ENCODE measurements at regions of chr4 and their contacts with region 1.

Region 1: DNA sequence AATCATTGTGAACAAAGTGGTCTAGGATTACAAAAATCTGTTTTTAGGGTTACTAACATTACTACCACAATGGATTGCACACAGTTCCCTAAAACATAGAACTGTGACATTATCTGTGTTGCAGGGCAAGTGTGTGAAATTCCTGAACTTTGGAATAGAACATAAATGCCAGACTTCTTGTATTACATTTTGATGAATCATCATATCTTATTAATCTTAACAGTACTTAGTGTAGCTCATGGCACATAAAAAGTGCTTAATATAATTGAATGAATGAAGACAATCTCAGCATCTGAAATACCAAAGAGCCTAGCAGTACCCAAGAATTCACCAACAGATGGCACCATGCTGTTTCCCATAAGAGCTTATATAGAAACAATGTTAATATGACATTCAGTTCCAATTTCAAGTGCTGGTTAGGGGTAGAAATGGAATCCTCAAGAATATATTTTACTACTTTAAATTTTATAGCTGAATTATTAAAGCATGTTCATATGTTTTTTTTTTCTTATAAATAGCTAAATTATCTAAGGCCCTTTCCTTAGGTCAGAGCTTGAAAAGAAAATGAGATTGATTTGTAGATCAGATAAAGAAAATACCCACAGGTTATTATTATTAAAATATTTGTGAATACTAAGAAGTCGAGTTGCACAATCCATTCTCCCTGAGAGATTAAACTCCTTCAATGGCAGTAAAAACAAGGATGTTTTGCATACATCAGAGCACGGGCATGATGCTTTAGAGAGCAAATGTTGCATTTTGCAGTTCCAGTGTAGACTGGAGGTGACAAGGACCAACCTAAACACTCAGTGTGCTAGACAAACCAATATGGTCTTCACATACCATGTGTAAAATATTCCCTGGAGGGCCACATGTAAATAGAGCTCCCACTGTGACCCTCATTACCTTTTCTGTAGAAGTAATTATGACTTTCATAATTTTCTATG is 25.7 kb upstream of the SHISA3 start:
- DNase-seq: peak; percentile 63
- H3K4me3 ChIP-seq: no peak overlapping the region
- H3K27ac ChIP-seq: no peak overlapping the region
- H3K4me1 ChIP-seq: no peaks in the 10 kb centered on the region
- CTCF ChIP-seq: peak; percentile 87

Region 2: DNA sequence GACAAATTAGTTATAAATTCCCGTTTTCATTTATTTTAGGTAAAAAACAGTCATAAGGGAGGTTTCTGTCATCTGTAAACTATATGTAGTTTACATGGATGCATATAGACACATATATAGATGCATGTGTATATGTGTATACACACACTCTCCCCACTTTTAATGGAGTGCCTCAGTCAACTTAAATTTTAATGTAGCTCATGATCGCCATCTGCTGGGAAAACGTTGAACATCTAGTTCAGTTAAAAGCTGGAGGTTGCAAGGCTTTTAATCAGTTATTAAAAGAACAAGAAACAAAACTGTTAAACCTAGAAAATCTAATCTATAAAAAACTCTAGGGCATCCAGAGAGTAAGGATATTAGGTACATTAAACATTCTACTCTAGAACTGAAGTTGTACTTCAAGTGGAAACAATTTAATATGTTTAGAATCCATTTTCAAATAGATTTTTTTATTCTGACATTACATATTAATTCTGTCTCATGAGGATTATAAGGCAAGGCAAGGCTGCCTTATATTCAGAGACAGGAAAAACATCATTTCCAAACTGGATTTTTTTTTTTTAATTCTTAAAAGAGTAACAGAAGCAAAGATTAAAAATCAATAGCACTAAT is 148.3 kb after region 1 on chr4:
- CTCF ChIA-PET with region 1: no interaction called
- POLR2A ChIA-PET with region 1: no interaction called
- intact Hi-C with region 1: loop called (anchors 5 kb)
- DNase-seq: peak; percentile 68
- H3K4me3 ChIP-seq: no peak overlapping the region
- H3K27ac ChIP-seq: no peak overlapping the region
- H3K4me1 ChIP-seq: peaks cover 8% of the 10 kb centered on the region
- CTCF ChIP-seq: peak; percentile 88

Region 3: DNA sequence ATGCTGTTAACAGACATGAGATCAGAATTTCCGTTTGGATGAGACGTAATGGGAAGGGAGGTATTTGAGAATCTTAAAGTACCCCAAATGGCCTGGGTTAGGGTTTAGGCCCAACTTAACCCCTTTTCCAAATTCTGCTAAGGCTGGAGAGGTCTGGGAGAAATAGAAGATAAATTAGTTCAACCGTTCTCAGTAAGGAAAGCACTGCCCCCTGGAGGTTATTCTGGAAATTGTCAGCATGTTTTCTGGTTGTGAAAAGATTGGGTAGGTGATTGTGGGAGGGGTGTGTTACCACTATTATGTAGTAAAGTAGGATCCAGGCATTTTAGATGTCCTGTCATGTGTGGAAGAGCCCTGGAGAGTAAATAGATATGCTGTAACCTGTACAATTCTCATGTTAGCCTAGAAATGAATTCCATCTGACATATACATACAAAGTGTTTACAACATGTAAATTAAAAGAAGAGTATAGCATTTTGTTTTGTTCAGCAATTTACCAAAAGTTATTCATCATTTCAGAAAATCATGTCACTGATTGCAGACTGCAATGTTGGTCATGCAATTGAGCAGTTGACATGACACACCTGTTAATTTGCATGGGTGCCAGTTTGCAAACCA is 494.1 kb after region 1 on chr4:
- CTCF ChIA-PET with region 1: no interaction called
- POLR2A ChIA-PET with region 1: no interaction called
- intact Hi-C with region 1: loop called (anchors 2 kb)
- DNase-seq: peak; percentile 62
- H3K4me3 ChIP-seq: no peak overlapping the region
- H3K27ac ChIP-seq: no peak overlapping the region
- H3K4me1 ChIP-seq: no peaks in the 10 kb centered on the region
- CTCF ChIP-seq: peak; percentile 94

Region 4: GRCh38 chr4:43331226-43332051 is 959.9 kb after region 1 on chr4:
- CTCF ChIA-PET with region 1: no interaction called
- POLR2A ChIA-PET with region 1: no interaction called
- intact Hi-C with region 1: no loop called
- DNase-seq: no peak
- H3K4me3 ChIP-seq: no peak overlapping the region
- H3K27ac ChIP-seq: no peak overlapping the region
- H3K4me1 ChIP-seq: no peaks in the 10 kb centered on the region
- CTCF ChIP-seq: no peak

Measured in OCI-LY7 (cell line).